Activated B cell treated with CpG ODN at 0.5 μM for 24 hours (primary cell): ENCODE measurements at regions of chr18 and their contacts with region 1.

Region 1: GRCh38 chr18:9136315-9137155 is at the start of gene ANKRD12:
- DNase-seq: peak; percentile 98
- ATAC-seq: peak; percentile 75
- H3K4me3 Mint-ChIP-seq: peak within 1 kb of the TSS; percentile 98
- H3K27ac Mint-ChIP-seq: peak within 1 kb of the TSS; percentile 99
- H3K4me1 Mint-ChIP-seq: peaks cover 62% of the 10 kb centered on the region
- H3K27me3 Mint-ChIP-seq: no peaks in the 10 kb centered on the region
- CTCF ChIP-seq: no peak
- total RNA-seq, gene ANKRD12: 121 and 125 TPM in 2 replicates

Region 2: GRCh38 chr18:8029061-8029460 is 1107.5 kb before region 1 on chr18:
- CTCF ChIA-PET with region 1: no interaction called
- POLR2A ChIA-PET with region 1: no interaction called
- intact Hi-C with region 1: no loop called
- DNase-seq: no peak
- ATAC-seq: no peak
- H3K4me3 Mint-ChIP-seq: no peak overlapping the region
- H3K27ac Mint-ChIP-seq: no peak overlapping the region
- H3K4me1 Mint-ChIP-seq: no peaks in the 10 kb centered on the region
- H3K27me3 Mint-ChIP-seq: no peaks in the 10 kb centered on the region
- CTCF ChIP-seq: no peak

Region 3: DNA sequence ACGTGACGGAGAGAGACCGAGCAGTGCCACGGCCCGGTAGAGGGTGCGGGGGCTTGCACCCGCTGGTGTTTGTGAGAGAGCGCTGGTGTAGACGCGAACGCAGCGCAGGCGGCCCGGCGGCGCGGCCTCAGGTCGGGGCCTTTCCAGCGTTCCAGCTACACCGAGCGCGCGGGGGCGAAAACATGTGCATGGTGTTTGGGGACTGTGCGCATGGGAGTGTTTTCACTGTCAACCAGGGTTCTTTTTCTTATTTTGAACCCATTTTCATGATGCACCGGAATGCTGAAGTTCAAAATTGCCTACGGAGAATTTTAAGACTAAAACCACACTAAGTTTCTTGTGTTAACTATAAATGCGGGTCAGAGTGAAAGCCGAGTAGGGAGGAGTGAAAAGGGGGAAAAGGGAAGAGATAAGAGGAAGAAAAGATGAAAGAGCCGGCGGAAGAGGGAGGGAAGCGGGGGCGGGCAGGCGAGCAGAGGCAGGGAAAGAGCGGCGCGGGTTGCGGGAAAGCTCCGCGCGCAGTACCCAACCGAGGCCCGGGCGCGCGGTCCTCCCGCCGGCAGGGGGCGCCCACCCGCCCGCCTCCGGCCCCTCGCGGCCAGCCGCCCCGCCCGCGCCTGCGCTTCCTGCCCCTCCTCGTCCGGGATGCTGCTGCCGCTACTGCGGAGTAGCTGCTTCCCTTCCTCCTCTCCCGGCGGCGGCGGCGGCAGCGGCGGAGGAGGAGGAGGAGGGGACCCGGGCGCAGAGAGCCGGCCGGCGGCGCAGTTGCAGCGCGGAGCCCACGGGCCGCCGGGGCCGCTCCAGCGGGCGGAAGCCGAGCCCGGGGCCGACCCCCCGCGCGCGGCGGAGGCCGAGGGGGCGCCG is 527.5 kb before region 1 on chr18 and contains the start of gene RAB12:
- CTCF ChIA-PET with region 1: no interaction called
- POLR2A ChIA-PET with region 1: interaction called, 5 read pairs
- intact Hi-C with region 1: loop called (anchors 5 kb)
- DNase-seq: peak; percentile 87
- ATAC-seq: peak; percentile 81
- H3K4me3 Mint-ChIP-seq: peak within 1 kb of the TSS; percentile 89
- H3K27ac Mint-ChIP-seq: peak within 1 kb of the TSS; percentile 89
- H3K4me1 Mint-ChIP-seq: peaks cover 76% of the 10 kb centered on the region
- H3K27me3 Mint-ChIP-seq: no peaks in the 10 kb centered on the region
- CTCF ChIP-seq: no peak
- total RNA-seq, gene RAB12: 25.3 and 27.5 TPM in 2 replicates

Region 4: DNA sequence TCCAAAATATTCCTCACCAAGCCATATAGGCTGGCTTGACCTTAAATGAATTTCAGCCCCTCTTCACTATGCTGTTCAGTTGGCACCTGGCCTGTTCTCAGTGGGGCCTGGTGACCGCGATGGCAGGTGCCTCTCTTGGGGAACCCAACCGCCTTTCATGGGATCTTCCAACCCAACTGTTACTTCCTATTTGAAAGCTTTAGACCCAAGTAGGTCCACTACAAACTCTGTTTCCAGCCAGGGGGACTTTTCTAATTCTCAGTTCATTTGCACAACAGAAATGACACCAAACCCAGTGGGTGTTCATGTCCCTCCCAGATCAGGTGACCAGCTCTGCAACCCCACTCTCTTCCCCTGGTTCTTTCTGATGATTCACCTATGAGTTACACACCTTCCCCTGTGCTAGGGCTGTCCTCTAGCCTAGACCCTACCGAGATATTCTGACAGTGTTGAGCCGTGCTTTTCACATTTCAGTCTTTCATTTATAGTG is 69.7 kb before region 1 on chr18:
- CTCF ChIA-PET with region 1: interaction called, 3 read pairs
- POLR2A ChIA-PET with region 1: interaction called, 29 read pairs
- intact Hi-C with region 1: no loop called
- DNase-seq: no peak
- ATAC-seq: peak; percentile 72
- H3K4me3 Mint-ChIP-seq: peak overlapping the region; percentile 62
- H3K27ac Mint-ChIP-seq: peak overlapping the region; percentile 91
- H3K4me1 Mint-ChIP-seq: peaks cover 73% of the 10 kb centered on the region
- H3K27me3 Mint-ChIP-seq: no peaks in the 10 kb centered on the region
- CTCF ChIP-seq: no peak

Region 5: DNA sequence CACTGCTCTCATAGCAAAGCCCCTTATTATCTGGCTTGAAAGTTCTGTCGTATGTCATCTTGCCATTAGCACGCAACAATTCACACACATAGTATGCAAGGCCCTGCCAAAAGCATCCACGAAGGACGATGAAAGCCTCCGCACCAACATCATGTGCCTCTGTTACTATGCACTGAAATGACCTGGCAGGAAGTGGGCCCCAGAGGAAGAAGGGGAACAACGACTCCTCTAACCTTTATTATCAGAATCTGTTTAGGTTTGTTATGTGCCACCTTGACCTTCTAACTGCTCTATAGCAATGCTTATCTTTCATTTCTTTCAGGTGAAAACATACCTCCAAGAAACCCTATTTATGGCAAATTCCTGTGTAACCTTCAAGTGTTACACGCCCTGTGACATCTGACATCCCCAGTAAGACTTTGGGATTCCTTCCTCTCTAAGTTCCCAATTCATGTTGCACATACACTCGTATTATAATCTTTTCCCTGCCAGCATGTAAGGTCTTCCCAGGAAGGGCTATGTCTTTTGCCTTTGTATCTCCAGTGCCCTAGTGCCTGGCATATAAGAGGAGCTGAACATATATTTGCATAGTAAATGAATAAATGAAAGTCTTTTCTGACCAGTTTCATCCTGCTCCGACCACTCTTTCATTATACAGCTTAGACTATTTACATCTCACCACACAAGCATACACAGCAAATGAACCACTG is 41.1 kb before region 1 on chr18:
- CTCF ChIA-PET with region 1: interaction called, 3 read pairs
- POLR2A ChIA-PET with region 1: interaction called, 34 read pairs
- intact Hi-C with region 1: no loop called
- DNase-seq: no peak
- ATAC-seq: peak; percentile 87
- H3K4me3 Mint-ChIP-seq: peak overlapping the region; percentile 74
- H3K27ac Mint-ChIP-seq: peak overlapping the region; percentile 92
- H3K4me1 Mint-ChIP-seq: peaks cover 21% of the 10 kb centered on the region
- H3K27me3 Mint-ChIP-seq: no peaks in the 10 kb centered on the region
- CTCF ChIP-seq: no peak

Region 6: GRCh38 chr18:9109523-9109922 is 27.0 kb before region 1 on chr18:
- CTCF ChIA-PET with region 1: interaction called, 4 read pairs
- POLR2A ChIA-PET with region 1: interaction called, 257 read pairs
- intact Hi-C with region 1: no loop called
- DNase-seq: no peak
- ATAC-seq: no peak
- H3K4me3 Mint-ChIP-seq: peak overlapping the region; percentile 2
- H3K27ac Mint-ChIP-seq: peak overlapping the region; percentile 99
- H3K4me1 Mint-ChIP-seq: peaks cover 97% of the 10 kb centered on the region
- H3K27me3 Mint-ChIP-seq: no peaks in the 10 kb centered on the region
- CTCF ChIP-seq: no peak

Region 7: GRCh38 chr18:9147440-9148202 is 11.1 kb after region 1 on chr18:
- CTCF ChIA-PET with region 1: interaction called, 5 read pairs
- POLR2A ChIA-PET with region 1: interaction called, 25 read pairs
- intact Hi-C with region 1: loop called (anchors 1 kb)
- DNase-seq: no peak
- ATAC-seq: peak; percentile 62
- H3K4me3 Mint-ChIP-seq: peak overlapping the region; percentile 39
- H3K27ac Mint-ChIP-seq: peak overlapping the region; percentile 83
- H3K4me1 Mint-ChIP-seq: peaks cover 79% of the 10 kb centered on the region
- H3K27me3 Mint-ChIP-seq: no peaks in the 10 kb centered on the region
- CTCF ChIP-seq: no peak

Region 8: DNA sequence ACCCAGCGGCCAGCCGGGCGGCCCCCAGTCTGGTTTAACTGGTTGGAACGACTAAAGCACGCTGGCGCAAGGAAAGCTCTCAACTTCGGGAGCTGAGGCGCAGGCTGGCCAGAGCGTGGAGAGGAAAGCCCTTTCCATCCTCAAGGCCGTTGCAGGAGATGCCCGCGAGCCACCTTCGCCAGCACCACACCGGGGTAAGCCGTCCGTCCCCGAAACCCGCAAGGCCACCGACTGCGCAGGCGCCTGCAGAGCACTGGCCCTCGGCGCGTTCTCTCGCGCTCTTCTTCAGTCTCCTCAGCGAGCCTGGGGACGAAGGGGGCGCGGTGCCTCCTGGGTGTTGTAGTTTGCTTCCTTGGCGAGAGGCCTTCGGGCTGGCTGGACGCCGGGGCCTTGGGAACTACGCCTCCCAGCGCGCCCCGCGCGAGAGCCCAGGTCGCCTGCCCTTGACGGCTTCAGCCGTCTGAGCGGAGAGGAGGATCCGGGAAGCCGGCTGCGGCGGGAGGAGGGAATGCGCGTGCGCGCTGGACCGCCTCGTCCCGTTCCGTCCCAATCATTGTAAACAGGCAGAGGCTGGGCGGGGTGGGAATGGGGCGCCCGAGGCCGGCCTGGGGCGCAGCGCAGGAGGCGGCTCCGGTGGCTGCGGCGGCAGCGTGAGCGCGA is 338.6 kb after region 1 on chr18 and contains the start of gene RALBP1:
- CTCF ChIA-PET with region 1: no interaction called
- POLR2A ChIA-PET with region 1: no interaction called
- intact Hi-C with region 1: loop called (anchors 1 kb)
- DNase-seq: peak; percentile 94
- ATAC-seq: peak; percentile 98
- H3K4me3 Mint-ChIP-seq: peak within 1 kb of the TSS; percentile 97
- H3K27ac Mint-ChIP-seq: peak within 1 kb of the TSS; percentile 91
- H3K4me1 Mint-ChIP-seq: peaks cover 25% of the 10 kb centered on the region
- H3K27me3 Mint-ChIP-seq: peaks cover 8% of the 10 kb centered on the region
- CTCF ChIP-seq: no peak
- total RNA-seq, gene RALBP1: 31.9 and 32.7 TPM in 2 replicates